ENCODE measurements at regions of chr17 and their contacts with region 1.

Region 1: DNA sequence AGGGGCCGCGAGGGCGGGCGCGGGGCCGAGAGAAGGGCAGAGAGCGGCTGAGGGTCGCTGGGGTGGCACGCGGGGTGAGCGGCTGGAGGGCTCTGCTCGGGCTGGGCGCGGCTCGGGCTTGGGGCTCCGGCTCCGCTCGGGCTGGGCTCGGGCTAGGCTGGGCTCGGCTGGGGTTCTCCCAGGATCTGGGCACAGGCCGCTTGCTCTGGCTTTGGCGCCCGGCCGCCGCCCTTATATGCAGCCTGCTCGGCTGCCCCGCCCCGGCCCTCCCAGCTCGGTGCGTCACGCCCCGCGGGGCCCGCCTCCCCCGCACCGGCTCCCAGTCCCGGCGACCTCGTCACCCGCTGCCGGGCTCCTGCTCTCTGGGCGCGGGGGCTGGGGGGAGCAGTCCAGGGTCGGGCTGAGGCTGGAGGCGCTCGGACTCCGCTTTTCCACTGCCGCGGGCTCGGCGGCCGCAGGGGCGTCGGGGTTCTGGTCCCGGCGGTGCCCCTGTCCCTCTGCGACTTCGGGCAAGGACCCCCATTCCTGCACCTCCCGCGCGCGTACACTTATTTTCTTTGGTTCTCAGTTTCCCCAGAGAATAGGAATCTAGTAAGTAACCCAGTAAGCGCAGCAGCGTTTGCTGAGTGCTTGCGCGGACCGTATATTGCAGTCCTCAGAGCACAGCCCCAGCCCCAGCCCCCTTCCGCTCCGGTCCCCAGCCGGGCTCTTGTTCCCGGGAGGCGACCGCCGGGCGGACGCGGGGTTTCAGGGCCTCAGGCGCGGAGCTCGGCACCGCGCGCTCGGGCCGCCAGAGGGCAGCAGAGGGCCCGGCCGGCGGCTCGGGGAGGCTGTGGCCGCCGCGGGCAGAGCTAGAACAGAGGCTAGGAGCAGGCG is at the start of gene RASD1:
- DNase-seq: peak; percentile 70 to 82 (median 77)
- H3K4me3 ChIP-seq: peak within 1 kb of the TSS; percentile 63
- H3K4me3 Mint-ChIP-seq: peak within 1 kb of the TSS; percentile 76 to 92 (median 85)
- H3K27ac ChIP-seq: no peak within 1 kb of the TSS
- H3K27ac Mint-ChIP-seq: peak within 1 kb of the TSS in 4 of 8 donors; percentile 16 to 84 (median 76)
- H3K4me1 ChIP-seq: peaks cover 10% of the 10 kb centered on the region
- H3K4me1 Mint-ChIP-seq: peaks cover 11 to 25% (median 11%) of the 10 kb centered on the region in 3 donors
- H3K27me3 ChIP-seq: no peaks in the 10 kb centered on the region
- H3K27me3 Mint-ChIP-seq: peaks cover 5 to 7% of the 10 kb centered on the region in 2 donors
- total RNA-seq, gene RASD1: 1.0 to 1.1 TPM

Region 2: GRCh38 chr17:17511881-17512858 is 15.7 kb after region 1 on chr17:
- CTCF ChIA-PET with region 1: interaction called, 11 read pairs
- POLR2A ChIA-PET with region 1: no interaction called
- DNase-seq: peak in 1 of 5 donors; percentile 41
- H3K4me3 ChIP-seq: no peak overlapping the region
- H3K4me3 Mint-ChIP-seq: no peak overlapping the region
- H3K27ac ChIP-seq: no peak overlapping the region
- H3K27ac Mint-ChIP-seq: no peak overlapping the region
- H3K4me1 ChIP-seq: no peaks in the 10 kb centered on the region
- H3K4me1 Mint-ChIP-seq: peaks cover 0 to 4% (median 0%) of the 10 kb centered on the region in 3 donors
- H3K27me3 ChIP-seq: no peaks in the 10 kb centered on the region
- H3K27me3 Mint-ChIP-seq: no peaks in the 10 kb centered on the region

Region 3: DNA sequence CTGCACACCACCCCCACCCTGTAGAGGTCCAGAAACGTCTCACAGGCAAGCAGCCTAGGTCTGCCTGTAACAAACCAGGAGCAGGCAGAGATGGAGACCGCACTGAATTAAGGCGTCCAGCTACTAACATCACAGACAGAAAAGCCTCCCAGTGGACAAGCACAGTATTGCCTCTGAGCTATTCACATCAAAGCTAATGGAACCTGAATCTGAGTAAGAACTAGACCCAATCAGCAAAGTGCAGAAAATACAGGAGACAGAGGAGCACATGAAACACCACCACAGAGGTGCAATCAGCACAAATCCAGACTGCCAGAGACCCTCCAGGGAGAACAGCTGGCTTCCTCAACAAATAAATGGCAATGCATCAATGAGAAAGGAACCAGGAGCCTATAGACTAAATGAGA is 117.3 kb after region 1 on chr17:
- CTCF ChIA-PET with region 1: interaction called, 14 read pairs
- POLR2A ChIA-PET with region 1: no interaction called
- DNase-seq: peak in 3 of 5 donors; percentile 14 to 34 (median 24)
- H3K4me3 ChIP-seq: no peak overlapping the region
- H3K4me3 Mint-ChIP-seq: no peak overlapping the region
- H3K27ac ChIP-seq: no peak overlapping the region
- H3K27ac Mint-ChIP-seq: no peak overlapping the region
- H3K4me1 ChIP-seq: no peaks in the 10 kb centered on the region
- H3K4me1 Mint-ChIP-seq: peaks cover 0 to 3% (median 2%) of the 10 kb centered on the region in 3 donors
- H3K27me3 ChIP-seq: no peaks in the 10 kb centered on the region
- H3K27me3 Mint-ChIP-seq: peaks cover 5 to 6% of the 10 kb centered on the region in 2 donors

Region 4: DNA sequence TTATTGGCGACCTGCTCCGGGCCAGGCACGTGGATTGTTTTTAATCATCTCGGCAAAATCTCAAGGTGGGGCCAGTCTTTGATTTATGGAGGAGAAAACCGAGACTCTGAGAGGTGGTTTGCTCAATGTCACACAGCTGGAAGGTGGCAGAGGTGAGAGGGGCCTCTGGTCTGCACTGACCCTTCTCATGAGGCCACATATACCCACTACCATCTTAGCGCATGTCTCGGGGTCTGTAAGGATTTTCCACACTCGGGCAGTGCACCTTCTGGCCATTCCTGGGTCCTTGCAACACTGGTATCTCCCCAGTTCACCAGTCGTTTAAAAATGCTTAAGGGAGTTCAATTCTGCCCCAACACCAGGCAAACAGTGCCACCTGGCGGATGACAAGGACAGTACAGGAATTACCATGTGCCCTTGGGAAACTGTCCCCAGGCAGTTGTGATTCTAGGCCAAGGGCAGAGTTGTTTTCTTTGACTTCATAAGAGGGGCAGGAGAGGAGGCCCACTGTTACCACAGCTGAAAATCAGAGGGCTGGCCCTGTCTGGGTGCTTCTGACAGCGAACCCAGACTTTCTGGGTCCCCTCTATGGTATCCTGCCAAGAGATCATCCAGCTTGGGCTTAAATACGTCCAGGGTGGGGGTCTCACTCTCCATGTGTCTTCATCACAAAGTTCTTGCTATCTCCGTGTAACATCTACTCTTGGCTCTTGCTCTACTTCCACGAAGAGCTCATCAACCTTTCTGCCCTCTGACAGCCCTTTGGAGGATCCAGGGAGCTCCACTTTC is 145.4 kb after region 1 on chr17:
- CTCF ChIA-PET with region 1: interaction called, 71 read pairs
- POLR2A ChIA-PET with region 1: interaction called, 5 read pairs
- DNase-seq: peak; percentile 61 to 82 (median 71)
- H3K4me3 ChIP-seq: no peak overlapping the region
- H3K4me3 Mint-ChIP-seq: no peak overlapping the region
- H3K27ac ChIP-seq: no peak overlapping the region
- H3K27ac Mint-ChIP-seq: peak overlapping the region in 1 of 8 donors; percentile 5
- H3K4me1 ChIP-seq: no peaks in the 10 kb centered on the region
- H3K4me1 Mint-ChIP-seq: peaks cover 0 to 3% (median 2%) of the 10 kb centered on the region in 3 donors
- H3K27me3 ChIP-seq: no peaks in the 10 kb centered on the region
- H3K27me3 Mint-ChIP-seq: peaks cover 5 to 14% of the 10 kb centered on the region in 2 donors